ENCODE measurements at regions of chr2 and their contacts with region 1.

Region 1: DNA sequence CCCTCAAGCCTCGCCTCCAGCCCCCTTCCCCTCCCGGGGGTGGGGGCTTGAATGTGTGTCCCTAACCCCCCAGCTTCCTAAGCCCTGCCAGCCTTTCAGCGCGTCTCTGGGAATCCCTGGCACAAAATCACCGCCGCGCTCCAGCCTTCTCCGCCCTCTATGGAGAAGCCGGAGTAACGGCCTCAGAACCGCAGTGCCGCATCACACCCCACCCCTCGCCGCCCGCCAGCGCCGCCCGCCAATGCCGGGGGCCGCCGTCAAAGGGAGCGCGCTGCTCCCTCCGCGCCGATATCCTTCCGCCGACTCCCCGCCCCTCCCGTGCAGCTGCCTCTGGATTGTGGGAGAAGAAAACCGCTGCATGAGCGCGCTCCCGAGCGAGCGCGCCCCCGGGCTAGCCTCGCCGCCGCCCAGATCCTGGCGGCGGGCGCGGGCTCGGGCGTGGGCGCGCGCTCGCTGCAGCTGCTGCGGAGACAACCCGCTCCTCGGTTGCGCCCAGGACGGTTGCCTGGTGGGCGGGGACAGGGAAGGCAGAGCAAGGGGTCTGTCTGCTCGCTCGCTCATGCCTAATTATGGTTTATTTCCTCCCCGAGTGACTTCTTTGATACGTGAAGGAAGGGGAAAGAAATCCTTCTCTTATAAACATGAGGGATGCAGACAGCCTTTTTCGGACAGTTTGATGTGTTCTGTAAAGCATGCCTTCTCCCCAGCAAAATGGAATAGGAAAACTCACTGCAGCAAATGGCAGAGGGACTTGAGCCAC is at the start of gene CCDC88A:
- DNase-seq: peak; percentile 98
- H3K4me3 ChIP-seq: peak within 1 kb of the TSS; percentile 84
- H3K27ac ChIP-seq: peak within 1 kb of the TSS; percentile 90
- H3K4me1 ChIP-seq: peaks cover 13% of the 10 kb centered on the region
- H3K27me3 ChIP-seq: no peaks in the 10 kb centered on the region
- CTCF ChIP-seq: peak; percentile 35
- total RNA-seq, gene CCDC88A: 84.5 and 96.9 TPM in 2 replicates

Region 2: DNA sequence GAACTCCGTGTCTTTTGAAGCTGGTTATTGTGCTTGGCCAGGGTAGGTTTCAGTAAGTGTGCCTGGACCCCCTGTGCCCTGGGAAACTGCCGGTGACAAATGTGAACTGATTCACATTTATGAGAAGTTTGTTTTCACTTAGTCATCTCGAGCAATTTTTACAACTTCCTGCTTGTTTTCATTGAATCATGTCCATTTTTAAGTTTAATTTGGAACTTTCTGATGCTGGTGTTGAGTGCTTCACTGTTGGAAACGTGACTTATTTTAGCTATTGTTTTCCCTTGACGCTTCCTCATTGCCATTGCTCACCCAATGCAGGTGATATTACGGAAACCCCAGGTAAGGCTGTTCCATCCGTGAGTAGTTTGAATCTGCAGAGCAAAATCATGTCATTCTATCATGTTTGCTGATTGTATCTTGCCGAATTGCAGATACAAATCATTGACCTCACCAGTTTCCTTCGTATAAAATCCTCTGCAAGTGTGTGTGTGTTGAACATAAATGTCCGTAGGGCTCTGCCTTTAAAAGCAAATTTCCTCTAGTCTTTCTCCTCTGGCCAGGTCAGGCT is 466.8 kb before region 1 on chr2:
- CTCF ChIA-PET with region 1: no interaction called
- POLR2A ChIA-PET with region 1: no interaction called
- intact Hi-C with region 1: no loop called
- DNase-seq: peak; percentile 63
- H3K4me3 ChIP-seq: no peak overlapping the region
- H3K27ac ChIP-seq: no peak overlapping the region
- H3K4me1 ChIP-seq: peaks cover 20% of the 10 kb centered on the region
- H3K27me3 ChIP-seq: no peaks in the 10 kb centered on the region
- CTCF ChIP-seq: no peak

Region 3: GRCh38 chr2:55232084-55232862 is 187.6 kb before region 1 on chr2 and contains the starts of genes CLHC1 and RPS27A:
- CTCF ChIA-PET with region 1: no interaction called
- POLR2A ChIA-PET with region 1: no interaction called
- intact Hi-C with region 1: loop called (anchors 2 kb)
- DNase-seq: peak; percentile 97
- H3K4me3 ChIP-seq: peak within 1 kb of the TSS; percentile 85
- H3K27ac ChIP-seq: peak within 1 kb of the TSS; percentile 98
- H3K4me1 ChIP-seq: peaks cover 22% of the 10 kb centered on the region
- H3K27me3 ChIP-seq: no peaks in the 10 kb centered on the region
- CTCF ChIP-seq: no peak
- total RNA-seq, gene CLHC1: 9.1 and 10.8 TPM in 2 replicates
- total RNA-seq, gene RPS27A: 876 and 928 TPM in 2 replicates

Region 4: DNA sequence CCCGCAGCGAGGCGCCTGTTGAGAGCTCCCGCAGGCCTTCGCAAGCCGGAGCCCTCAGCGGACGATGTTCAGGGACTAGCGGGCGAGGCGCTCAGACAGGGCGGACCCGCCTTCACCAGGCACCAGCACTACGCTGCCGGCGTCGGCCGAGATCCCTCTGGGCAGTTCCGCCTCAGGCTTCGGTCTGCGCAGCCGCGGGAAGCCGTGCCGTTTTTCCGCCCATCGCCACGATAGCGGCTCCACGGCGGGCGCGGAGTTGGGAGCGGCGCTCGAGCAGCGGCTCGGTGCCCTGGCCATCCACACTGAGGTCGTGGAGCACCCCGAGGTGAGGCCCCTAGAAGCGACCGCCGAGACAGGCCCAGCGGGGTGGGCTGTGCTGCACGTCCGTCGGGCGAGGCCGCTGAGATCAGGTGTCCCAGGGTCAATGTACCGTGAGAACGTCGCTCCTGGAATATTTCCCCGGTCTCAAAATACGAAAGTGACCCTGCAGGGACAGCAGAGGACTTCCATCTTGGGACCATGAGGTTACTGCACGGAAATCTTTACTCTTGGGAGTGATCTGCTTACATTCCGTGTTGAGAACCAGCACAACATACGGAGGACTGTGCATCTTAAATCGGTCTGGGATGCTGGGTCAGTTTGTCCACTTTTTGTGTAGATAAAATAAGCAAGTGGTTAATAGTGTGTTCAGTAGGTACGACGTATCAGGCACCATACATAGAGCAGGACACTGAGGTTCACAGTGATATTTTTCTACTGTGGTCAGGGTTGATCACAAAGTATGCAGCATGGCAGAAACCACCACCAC is 137.5 kb before region 1 on chr2:
- CTCF ChIA-PET with region 1: no interaction called
- POLR2A ChIA-PET with region 1: no interaction called
- intact Hi-C with region 1: loop called (anchors 10 kb)
- DNase-seq: peak; percentile 91
- H3K4me3 ChIP-seq: peak overlapping the region; percentile 61
- H3K27ac ChIP-seq: peak overlapping the region; percentile 75
- H3K4me1 ChIP-seq: peaks cover 3% of the 10 kb centered on the region
- H3K27me3 ChIP-seq: no peaks in the 10 kb centered on the region
- CTCF ChIP-seq: no peak

Region 5: GRCh38 chr2:55482186-55482884 is 62.5 kb after region 1 on chr2:
- CTCF ChIA-PET with region 1: no interaction called
- POLR2A ChIA-PET with region 1: no interaction called
- intact Hi-C with region 1: no loop called
- DNase-seq: peak; percentile 78
- H3K4me3 ChIP-seq: no peak overlapping the region
- H3K27ac ChIP-seq: peak overlapping the region; percentile 44
- H3K4me1 ChIP-seq: peaks cover 11% of the 10 kb centered on the region
- H3K27me3 ChIP-seq: no peaks in the 10 kb centered on the region
- CTCF ChIP-seq: no peak

Region 6: DNA sequence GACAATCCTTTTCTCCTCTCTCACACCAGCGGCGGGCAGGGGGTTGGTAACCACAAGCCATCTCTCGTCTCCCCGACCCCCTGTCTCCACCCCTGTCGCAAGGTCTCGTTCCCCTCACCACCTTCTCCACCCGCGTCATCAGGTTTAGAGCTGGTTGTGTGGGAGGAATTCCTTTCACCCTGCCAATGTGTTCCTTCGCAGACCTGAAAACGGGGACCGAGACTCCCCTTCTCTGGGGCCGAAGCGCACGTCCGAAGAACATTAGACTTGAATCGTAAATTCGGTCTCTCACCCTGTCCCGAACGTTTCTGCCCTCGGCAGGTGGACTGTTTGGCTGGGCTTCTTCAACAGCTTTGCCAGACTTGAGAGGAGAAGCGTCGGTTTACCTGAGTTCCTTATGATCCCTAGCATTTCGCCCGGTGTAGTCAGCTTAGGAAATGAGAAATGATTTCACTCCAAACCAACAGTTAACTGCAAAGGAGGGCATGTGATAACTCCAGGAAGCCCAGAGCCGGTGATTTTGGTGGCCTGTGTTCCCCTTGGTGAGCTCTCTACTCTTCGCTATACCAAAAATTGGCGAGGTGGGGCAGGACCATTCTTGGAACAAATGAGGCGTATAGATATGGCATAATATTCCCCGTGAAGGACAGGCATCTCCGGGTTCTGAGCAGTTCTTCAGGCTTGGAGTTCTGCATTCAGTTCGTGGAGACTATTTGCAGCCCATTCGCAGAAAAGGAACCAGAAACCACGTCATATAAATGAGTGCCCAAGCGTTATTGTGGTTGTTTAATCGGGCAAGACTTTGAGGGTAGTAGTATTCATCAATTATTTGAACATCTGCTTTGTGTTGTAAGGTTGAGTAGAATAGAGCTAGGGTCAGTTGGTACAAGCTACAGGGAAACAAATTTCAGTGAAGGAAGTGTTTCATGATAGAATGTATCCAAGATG is 100.4 kb after region 1 on chr2:
- CTCF ChIA-PET with region 1: no interaction called
- POLR2A ChIA-PET with region 1: no interaction called
- intact Hi-C with region 1: loop called (anchors 5 kb)
- DNase-seq: no peak
- H3K4me3 ChIP-seq: peak overlapping the region; percentile 72
- H3K27ac ChIP-seq: peak overlapping the region; percentile 59
- H3K4me1 ChIP-seq: peaks cover 4% of the 10 kb centered on the region
- H3K27me3 ChIP-seq: no peaks in the 10 kb centered on the region
- CTCF ChIP-seq: no peak

Region 7: DNA sequence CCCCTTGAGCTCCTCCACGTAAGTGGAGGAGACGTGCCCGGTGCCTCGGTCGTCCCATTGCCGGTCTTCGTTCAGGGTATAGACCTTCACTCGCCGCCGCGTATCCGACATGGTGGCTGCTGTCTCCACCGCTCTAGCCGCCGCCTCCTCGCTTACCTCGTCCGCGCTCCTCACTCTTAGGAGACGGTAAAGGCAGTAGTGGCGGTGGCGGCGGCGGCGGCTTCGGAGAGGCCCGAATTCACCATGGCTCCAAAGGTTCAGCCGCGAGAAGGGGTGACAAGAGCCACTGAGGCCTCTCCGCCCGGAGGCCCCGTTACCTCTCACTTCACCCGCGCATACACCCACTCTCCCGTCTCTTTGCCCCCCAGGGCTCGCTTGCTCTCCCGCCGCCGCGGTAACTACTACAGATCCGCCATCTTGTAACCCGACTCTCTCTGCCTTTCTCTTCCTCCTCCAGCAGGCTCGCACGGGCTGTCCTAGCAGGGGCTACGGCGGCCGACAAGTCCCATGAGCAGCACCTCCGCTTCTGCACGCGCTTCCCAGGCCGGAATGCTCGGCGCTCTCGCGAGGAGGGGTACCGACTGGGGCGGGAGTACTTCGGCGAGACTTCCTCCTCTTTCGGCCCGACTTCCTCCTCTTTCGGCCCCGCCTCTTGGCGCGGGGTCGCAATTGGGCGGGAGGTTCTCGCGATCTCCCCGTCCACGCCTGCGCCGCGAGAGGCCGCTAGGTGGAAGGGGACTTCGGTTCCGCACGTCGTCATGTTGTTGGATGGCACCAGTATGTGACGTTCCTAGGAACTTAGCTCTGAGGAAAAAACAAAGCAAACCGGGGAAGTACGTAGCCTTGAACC is 197.5 kb after region 1 on chr2 and contains the start of gene PPP4R3B:
- CTCF ChIA-PET with region 1: no interaction called
- POLR2A ChIA-PET with region 1: no interaction called
- intact Hi-C with region 1: loop called (anchors 10 kb)
- DNase-seq: peak; percentile 100
- H3K4me3 ChIP-seq: peak within 1 kb of the TSS; percentile 83
- H3K27ac ChIP-seq: peak within 1 kb of the TSS; percentile 98
- H3K4me1 ChIP-seq: peaks cover 12% of the 10 kb centered on the region
- H3K27me3 ChIP-seq: no peaks in the 10 kb centered on the region
- CTCF ChIP-seq: peak; percentile 42
- total RNA-seq, gene PPP4R3B: 49.8 and 57.9 TPM in 2 replicates

Measured in A673 (cell line).